ENCODE measurements at regions of chr7 and their contacts with region 1.

Region 1: GRCh38 chr7:1986366-1987083 is 246.2 kb downstream of the MAD1L1 start:
- DNase-seq: no peak
- ATAC-seq: no peak; the same call in 1 of the 2 replicates
- H3K4me3 ChIP-seq: no peak overlapping the region
- H3K27ac ChIP-seq: no peak overlapping the region
- H3K4me1 ChIP-seq: no peaks in the 10 kb centered on the region
- H3K27me3 ChIP-seq: no peaks in the 10 kb centered on the region
- CTCF ChIP-seq: no peak

Region 2: GRCh38 chr7:1262441-1262840 is 724.1 kb before region 1 on chr7:
- CTCF ChIA-PET with region 1: interaction called, 13 read pairs
- POLR2A ChIA-PET with region 1: no interaction called
- in situ Hi-C with region 1: no loop called
- intact Hi-C with region 1: no loop called
- DNase-seq: no peak
- ATAC-seq: no peak; the same call in 1 of the 2 replicates
- H3K4me3 ChIP-seq: no peak overlapping the region
- H3K27ac ChIP-seq: no peak overlapping the region
- H3K4me1 ChIP-seq: no peaks in the 10 kb centered on the region
- H3K27me3 ChIP-seq: peaks cover 22% of the 10 kb centered on the region
- CTCF ChIP-seq: no peak

Region 3: GRCh38 chr7:2258661-2259365 is 272.3 kb after region 1 on chr7:
- CTCF ChIA-PET with region 1: no interaction called
- POLR2A ChIA-PET with region 1: no interaction called
- in situ Hi-C with region 1: no loop called
- intact Hi-C with region 1: no loop called
- DNase-seq: no peak
- ATAC-seq: no peak
- H3K4me3 ChIP-seq: no peak overlapping the region
- H3K27ac ChIP-seq: no peak overlapping the region
- H3K4me1 ChIP-seq: peaks cover 3% of the 10 kb centered on the region; the same call in 1 of the 2 replicates
- H3K27me3 ChIP-seq: no peaks in the 10 kb centered on the region
- CTCF ChIP-seq: no peak